Gastrocnemius medialis (tissue), 4 donors: ENCODE measurements at regions of chr4 and their contacts with region 1.

Region 1: DNA sequence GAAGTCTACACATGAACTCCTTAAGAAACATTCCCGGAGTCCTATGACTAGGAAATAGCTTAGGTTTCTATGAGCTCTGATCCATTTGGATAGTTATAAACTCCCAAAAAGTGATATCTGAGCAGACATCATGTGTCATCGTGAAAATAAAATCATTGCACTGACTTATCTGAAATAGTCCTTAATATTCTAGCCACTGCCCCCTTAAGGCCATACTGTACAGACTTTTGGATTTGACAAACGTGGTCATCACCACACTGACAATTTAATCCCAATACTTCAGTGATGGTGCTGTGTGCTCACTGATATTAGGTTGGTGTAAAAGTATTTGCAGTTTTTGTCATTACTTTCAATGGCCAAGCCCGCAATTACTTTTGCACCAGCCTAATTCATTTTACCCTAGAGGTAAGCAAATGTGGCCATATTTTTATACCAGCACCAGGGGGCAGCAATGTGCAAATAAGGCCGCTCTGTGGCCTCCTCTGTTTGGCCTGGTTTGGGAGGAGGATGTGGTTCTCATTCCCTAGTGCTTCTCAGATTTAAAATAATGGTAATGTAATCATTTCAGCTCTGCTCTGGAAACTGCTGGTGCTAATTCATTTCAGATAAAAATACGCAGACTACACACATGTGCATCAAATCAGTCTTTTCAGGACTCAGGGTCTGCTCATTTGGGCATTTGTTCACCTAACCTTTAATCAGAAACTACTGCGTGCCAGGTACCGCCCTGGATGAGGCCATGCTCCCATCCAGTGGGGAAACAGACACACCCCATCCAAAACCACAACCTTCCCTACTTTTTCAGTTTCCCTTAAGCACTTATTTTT is 196.4 kb upstream of the C1QTNF7 start:
- DNase-seq: peak; percentile 51 to 64
- ATAC-seq: peak; percentile 81
- H3K4me3 ChIP-seq: no peak overlapping the region
- H3K27ac ChIP-seq: no peak overlapping the region
- H3K4me1 ChIP-seq: no peaks in the 10 kb centered on the region
- H3K27me3 ChIP-seq: no peaks in the 10 kb centered on the region
- CTCF ChIP-seq: peak; percentile 32 to 53 (median 39)
- POLR2A ChIP-seq: no peak

Region 2: GRCh38 chr4:15396157-15396800 is 164.8 kb after region 1 on chr4:
- in situ Hi-C with region 1: no loop called
- intact Hi-C with region 1: loop called (anchors 10 kb)
- DNase-seq: no peak
- ATAC-seq: no peak
- H3K4me3 ChIP-seq: no peak overlapping the region
- H3K27ac ChIP-seq: no peak overlapping the region
- H3K4me1 ChIP-seq: no peaks in the 10 kb centered on the region
- H3K27me3 ChIP-seq: no peaks in the 10 kb centered on the region
- CTCF ChIP-seq: peak in 4 of 5 experiments; percentile 11 to 50 (median 37)
- POLR2A ChIP-seq: no peak

Region 3: DNA sequence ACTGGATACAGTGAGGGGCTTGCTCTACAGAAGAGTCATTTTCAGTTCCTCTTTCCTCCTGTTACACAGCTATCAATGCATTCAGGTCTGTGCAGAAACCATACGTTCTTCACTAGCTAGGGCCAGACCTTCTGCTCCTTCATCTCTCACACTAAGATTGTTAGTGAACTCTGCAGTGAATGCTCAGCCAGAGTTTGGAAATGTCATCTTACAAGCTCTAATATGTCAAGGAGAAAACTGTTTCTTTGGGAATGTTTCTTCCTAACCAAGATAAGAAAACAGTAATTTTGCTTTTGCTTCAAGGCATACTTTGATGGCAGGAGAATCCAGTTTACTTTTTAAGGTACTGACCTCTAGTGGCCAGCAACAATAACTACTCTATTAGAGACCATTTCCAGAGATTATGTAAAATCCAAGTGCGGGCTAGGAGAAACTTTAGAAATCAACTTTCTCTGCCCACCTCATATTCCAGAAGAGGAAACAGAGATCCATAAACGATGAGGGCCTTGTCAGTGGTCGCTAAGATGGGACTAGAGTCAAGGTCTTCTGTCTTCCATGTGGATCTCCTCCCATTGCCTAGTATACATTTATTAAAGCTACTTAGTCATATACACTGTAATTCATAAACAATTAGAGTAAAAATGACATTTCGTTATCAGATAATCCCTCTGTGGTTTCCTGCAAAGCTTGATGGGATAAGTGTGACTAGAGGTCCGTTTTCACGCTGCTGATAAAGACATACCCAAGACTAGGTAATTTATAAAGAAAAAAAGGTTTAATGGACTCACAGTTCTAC is 226.1 kb after region 1 on chr4:
- in situ Hi-C with region 1: loop called (anchors 5 to 10 kb)
- intact Hi-C with region 1: loop called (anchors 2 kb)
- DNase-seq: no peak
- ATAC-seq: peak; percentile 36 to 70
- H3K4me3 ChIP-seq: no peak overlapping the region
- H3K27ac ChIP-seq: peak overlapping the region in 2 of 4 donors; percentile 0 to 42
- H3K4me1 ChIP-seq: peaks cover 0 to 13% of the 10 kb centered on the region in 2 donors
- H3K27me3 ChIP-seq: no peaks in the 10 kb centered on the region
- CTCF ChIP-seq: peak; percentile 52 to 77 (median 65)
- POLR2A ChIP-seq: no peak

Region 4: GRCh38 chr4:15649914-15650545 is 418.6 kb after region 1 on chr4:
- in situ Hi-C with region 1: loop called in 1 of 4 experiments (anchors 25 kb)
- intact Hi-C with region 1: loop called (anchors 5 kb)
- DNase-seq: peak; percentile 18 to 55
- ATAC-seq: peak; percentile 76 to 84
- H3K4me3 ChIP-seq: peak overlapping the region in 1 of 4 donors; percentile 2
- H3K27ac ChIP-seq: peak overlapping the region; percentile 11 to 99 (median 30)
- H3K4me1 ChIP-seq: peaks cover 64 to 68% of the 10 kb centered on the region in 2 donors
- H3K27me3 ChIP-seq: no peaks in the 10 kb centered on the region
- CTCF ChIP-seq: peak; percentile 44 to 78 (median 74)
- POLR2A ChIP-seq: no peak

Region 5: DNA sequence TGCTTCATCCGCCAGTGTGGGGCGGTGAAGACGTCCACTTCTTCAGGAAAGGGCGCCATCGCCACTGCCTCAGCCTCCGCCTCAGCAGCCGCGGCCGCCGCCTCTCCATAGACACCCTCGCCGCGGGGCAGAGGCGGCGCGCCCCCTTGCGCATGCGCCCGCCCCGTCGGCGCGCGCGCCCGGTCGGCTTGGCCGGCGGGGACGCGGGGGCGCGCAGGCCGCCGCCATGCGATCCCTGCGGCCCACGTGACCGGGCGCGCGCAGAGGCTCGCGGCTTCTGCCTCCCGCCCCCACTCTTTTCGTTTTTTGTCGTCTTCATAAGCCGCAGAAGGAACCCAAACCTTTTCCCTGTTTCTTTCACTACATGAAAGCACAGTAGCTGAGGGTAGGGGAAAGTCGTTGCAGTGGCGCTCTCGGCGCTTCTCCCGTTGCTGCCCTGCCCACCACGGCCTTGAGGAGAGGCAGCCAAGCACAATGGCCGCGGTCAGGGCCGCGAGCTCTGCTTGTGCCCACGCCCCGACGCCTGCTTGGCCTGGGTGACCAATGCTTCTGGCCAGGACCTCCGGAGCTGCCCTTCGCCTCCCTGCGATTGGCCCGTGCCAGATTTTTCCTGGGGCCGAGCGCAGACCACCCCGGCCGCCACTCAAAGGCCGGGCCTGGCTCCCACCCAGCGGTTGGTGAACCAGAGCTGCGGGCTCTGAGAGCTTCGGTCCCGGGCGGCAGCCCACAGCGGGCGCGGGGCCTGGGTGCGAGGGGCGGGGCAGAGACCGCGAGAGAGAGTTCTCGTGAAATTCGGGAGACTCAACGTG is 424.0 kb after region 1 on chr4 and contains the start of gene FBXL5:
- in situ Hi-C with region 1: loop called in 1 of 4 experiments (anchors 25 kb)
- intact Hi-C with region 1: loop called (anchors 5 kb)
- DNase-seq: peak; percentile 42 to 74
- ATAC-seq: peak; percentile 78 to 87
- H3K4me3 ChIP-seq: peak within 1 kb of the TSS; percentile 74 to 94 (median 83)
- H3K27ac ChIP-seq: peak within 1 kb of the TSS; percentile 97 to 100 (median 98)
- H3K4me1 ChIP-seq: peaks cover 39 to 45% of the 10 kb centered on the region in 2 donors
- H3K27me3 ChIP-seq: no peaks in the 10 kb centered on the region
- CTCF ChIP-seq: no peak
- POLR2A ChIP-seq: peak; percentile 81 to 84
- total RNA-seq, gene FBXL5: 81.7 to 106 (median 89.8) TPM